AG04450 (cell line): ENCODE measurements at regions of chr6 and their contacts with region 1.

Region 1: GRCh38 chr6:2749969-2750600 is 637 bp downstream of the MYLK4 start:
- DNase-seq: no peak
- H3K4me3 ChIP-seq: no peak overlapping the region
- H3K27ac ChIP-seq: no peak overlapping the region
- H3K27me3 ChIP-seq: no peaks in the 10 kb centered on the region
- CTCF ChIP-seq: peak; percentile 87

Region 2: DNA sequence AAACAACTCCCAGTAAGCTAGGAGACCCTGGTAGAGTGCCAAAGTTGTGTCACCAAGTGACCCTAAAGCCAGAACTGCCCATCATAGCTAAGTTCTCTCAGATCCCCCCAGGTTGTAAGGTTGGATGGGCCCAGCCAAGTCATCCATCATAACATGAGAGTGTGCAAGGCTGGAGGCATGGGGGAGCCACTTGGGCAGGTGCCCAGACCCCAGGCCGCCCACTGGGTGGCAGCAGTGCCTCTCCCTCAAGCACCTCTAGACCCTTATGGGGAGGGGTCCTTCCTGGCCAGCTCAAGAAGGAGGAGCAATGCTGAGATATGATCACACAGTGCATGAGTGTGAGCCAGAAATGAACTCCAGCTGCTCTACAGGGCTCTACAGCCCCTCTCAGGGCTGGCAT is 153.9 kb before region 1 on chr6:
- CTCF ChIA-PET with region 1: no interaction called
- POLR2A ChIA-PET with region 1: no interaction called
- DNase-seq: no peak
- H3K4me3 ChIP-seq: no peak overlapping the region
- H3K27ac ChIP-seq: no peak overlapping the region
- H3K27me3 ChIP-seq: peaks cover 8% of the 10 kb centered on the region
- CTCF ChIP-seq: no peak

Region 3: GRCh38 chr6:2733324-2733723 is 16.8 kb before region 1 on chr6:
- CTCF ChIA-PET with region 1: interaction called, 131 read pairs
- POLR2A ChIA-PET with region 1: no interaction called
- DNase-seq: no peak
- H3K4me3 ChIP-seq: no peak overlapping the region
- H3K27ac ChIP-seq: no peak overlapping the region
- H3K27me3 ChIP-seq: no peaks in the 10 kb centered on the region
- CTCF ChIP-seq: no peak

Region 4: GRCh38 chr6:2738373-2738979 is 11.6 kb before region 1 on chr6:
- CTCF ChIA-PET with region 1: interaction called, 131 read pairs
- POLR2A ChIA-PET with region 1: no interaction called
- DNase-seq: peak; percentile 45
- H3K4me3 ChIP-seq: no peak overlapping the region
- H3K27ac ChIP-seq: no peak overlapping the region
- H3K27me3 ChIP-seq: no peaks in the 10 kb centered on the region
- CTCF ChIP-seq: peak; percentile 83

Region 5: GRCh38 chr6:2765166-2765895 is 15.2 kb after region 1 on chr6 and contains the start of gene WRNIP1:
- CTCF ChIA-PET with region 1: interaction called, 79 read pairs
- POLR2A ChIA-PET with region 1: no interaction called
- DNase-seq: peak; percentile 98
- H3K4me3 ChIP-seq: peak within 1 kb of the TSS; percentile 91
- H3K27ac ChIP-seq: peak within 1 kb of the TSS; percentile 92
- H3K27me3 ChIP-seq: no peaks in the 10 kb centered on the region
- CTCF ChIP-seq: peak; percentile 50
- polyA plus RNA-seq, gene WRNIP1: 28.0 and 35.2 TPM in 2 replicates

Region 6: DNA sequence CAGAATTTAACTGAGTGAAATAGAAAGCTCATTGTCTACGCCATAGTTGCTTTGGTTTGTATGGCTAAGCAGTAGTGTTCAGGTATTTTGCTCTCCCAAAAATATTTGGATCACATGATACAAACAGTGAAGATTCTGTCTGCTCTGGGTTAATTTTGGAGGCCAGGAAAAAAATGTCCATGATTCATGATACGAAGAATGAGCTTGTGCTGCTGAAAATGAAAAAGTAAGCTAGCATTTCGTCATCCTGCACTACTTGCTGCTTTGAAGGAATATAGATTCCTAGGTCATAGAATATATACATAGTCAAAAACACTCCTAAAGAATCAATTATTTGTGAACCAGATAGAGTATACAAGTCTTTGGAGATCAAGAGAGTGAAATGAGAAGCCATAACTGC is 23.4 kb after region 1 on chr6:
- CTCF ChIA-PET with region 1: interaction called, 46 read pairs
- POLR2A ChIA-PET with region 1: no interaction called
- DNase-seq: no peak
- H3K4me3 ChIP-seq: no peak overlapping the region
- H3K27ac ChIP-seq: no peak overlapping the region
- H3K27me3 ChIP-seq: no peaks in the 10 kb centered on the region
- CTCF ChIP-seq: no peak